ENCODE measurements at regions of chr15 and their contacts with region 1.

Region 1: DNA sequence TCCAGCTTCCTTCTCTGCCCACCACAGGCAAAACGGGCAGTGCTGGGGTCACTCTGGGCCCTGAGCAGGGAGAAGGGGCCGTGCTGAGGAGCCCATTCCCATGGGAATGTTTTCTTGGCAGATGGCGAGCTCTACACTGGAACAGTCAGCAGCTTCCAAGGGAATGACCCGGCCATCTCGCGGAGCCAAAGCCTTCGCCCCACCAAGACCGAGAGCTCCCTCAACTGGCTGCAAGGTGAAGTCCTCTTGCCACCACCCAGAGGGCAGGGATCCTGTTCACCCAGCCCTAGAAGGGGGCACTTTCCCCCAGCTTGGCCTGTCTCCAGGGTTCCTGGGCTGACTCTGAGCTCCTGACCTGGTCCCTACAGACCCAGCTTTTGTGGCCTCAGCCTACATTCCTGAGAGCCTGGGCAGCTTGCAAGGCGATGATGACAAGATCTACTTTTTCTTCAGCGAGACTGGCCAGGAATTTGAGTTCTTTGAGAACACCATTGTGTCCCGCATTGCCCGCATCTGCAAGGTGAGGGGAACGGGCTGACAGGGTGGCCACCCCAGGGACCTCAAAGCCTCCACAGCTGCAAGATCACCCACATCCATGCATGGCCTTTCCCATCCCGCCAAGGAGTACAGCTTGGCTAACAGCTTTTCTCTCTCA is 12.4 kb downstream of the CIB1 start:
- DNase-seq: peak; percentile 86
- ATAC-seq: peak; percentile 98
- H3K4me3 ChIP-seq: no peak overlapping the region
- H3K27ac ChIP-seq: no peak overlapping the region
- H3K4me1 ChIP-seq: peaks cover 3% of the 10 kb centered on the region; the same call in 1 of the 2 replicates
- H3K27me3 ChIP-seq: no peaks in the 10 kb centered on the region
- CTCF ChIP-seq: peak; percentile 89
- POLR2A ChIP-seq: no peak
- RAD21 ChIP-seq: peak; percentile 95

Region 2: DNA sequence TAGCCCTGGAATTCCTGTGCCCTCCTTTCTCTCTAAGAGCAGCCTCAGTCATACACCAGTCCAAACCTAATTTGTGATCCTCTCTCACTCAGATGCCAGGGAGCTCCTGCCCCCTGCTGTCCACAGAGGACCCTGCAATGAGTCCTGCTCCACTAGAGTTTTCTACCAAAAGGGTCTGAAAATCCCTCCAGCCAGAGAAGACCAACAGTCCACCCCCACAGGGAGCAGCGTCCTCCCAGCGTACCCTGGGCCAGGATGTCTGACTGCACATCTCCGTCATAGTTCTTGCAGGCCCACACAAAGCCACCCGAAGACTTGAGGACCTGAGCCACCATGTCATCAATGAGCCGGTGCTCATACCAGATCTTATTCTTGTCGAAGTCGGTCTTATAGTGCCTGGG is 134.5 kb before region 1 on chr15:
- CTCF ChIA-PET with region 1: interaction called, 3 read pairs
- POLR2A ChIA-PET with region 1: no interaction called
- dilution Hi-C with region 1: no loop called
- in situ Hi-C with region 1: no loop called
- intact Hi-C with region 1: loop called (anchors 10 kb)
- DNase-seq: peak; percentile 42
- ATAC-seq: peak; percentile 75
- H3K4me3 ChIP-seq: no peak overlapping the region
- H3K27ac ChIP-seq: no peak overlapping the region
- H3K4me1 ChIP-seq: peaks cover 4% of the 10 kb centered on the region; the same call in 1 of the 2 replicates
- H3K27me3 ChIP-seq: no peaks in the 10 kb centered on the region
- CTCF ChIP-seq: peak; percentile 67
- POLR2A ChIP-seq: no peak
- RAD21 ChIP-seq: peak; percentile 79

Region 3: GRCh38 chr15:90161950-90162361 is 59.4 kb before region 1 on chr15:
- CTCF ChIA-PET with region 1: interaction called, 11 read pairs
- POLR2A ChIA-PET with region 1: no interaction called
- dilution Hi-C with region 1: no loop called
- in situ Hi-C with region 1: loop called (anchors 5 kb)
- intact Hi-C with region 1: no loop called
- DNase-seq: no peak
- ATAC-seq: no peak
- H3K4me3 ChIP-seq: no peak overlapping the region
- H3K27ac ChIP-seq: no peak overlapping the region
- H3K4me1 ChIP-seq: peaks cover 10% of the 10 kb centered on the region
- H3K27me3 ChIP-seq: no peaks in the 10 kb centered on the region
- CTCF ChIP-seq: no peak
- POLR2A ChIP-seq: no peak
- RAD21 ChIP-seq: no peak

Region 4: DNA sequence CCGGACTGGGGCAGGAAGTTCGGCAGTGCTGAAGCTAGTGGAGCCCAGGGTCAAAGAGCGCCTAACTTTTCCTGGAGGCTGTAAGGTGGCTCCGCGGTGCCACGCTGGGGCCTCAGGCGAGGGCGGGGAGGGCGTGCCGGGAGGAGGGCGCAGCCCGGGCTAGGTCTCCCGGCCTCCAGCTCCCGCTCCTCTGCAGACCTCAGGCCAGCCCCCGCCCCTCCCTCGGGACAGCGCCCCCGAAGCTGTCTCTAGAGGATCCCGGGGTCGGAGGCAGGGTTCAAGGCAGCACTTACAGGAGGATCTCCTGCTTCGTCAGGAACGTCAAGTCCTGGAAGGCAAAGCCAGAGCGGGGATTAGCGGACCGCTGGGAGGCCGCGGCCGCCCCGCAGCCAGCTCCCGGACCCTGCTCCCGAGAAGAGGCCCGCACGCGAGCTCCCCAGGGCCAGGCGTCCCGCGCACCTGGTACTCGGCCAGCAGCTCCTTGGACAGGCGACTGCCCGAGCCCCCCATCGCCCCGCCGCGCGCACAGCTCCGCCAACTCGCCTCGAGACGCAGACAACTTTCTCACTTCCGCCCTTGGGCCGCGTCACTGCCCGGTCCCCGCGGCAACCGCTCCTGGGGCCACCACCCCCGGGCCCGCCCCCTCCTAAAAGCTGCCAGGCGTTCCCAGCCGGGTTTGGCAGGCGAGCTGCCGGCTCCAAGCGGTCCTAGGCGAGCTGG is 12.2 kb after region 1 on chr15 and contains the start of gene CIB1:
- CTCF ChIA-PET with region 1: interaction called, 11 read pairs
- POLR2A ChIA-PET with region 1: no interaction called
- dilution Hi-C with region 1: no loop called
- in situ Hi-C with region 1: no loop called
- intact Hi-C with region 1: no loop called
- DNase-seq: peak; percentile 95
- ATAC-seq: peak; percentile 97
- H3K4me3 ChIP-seq: peak within 1 kb of the TSS; percentile 84
- H3K27ac ChIP-seq: peak within 1 kb of the TSS; percentile 77
- H3K4me1 ChIP-seq: peaks cover 4% of the 10 kb centered on the region
- H3K27me3 ChIP-seq: no peaks in the 10 kb centered on the region
- CTCF ChIP-seq: no peak; the same call in 1 of the 2 replicates
- POLR2A ChIP-seq: peak; percentile 85; the same call in 1 of the 2 replicates
- RAD21 ChIP-seq: peak; percentile 48; the same call in 1 of the 2 replicates
- total RNA-seq, gene CIB1: 29.4 and 31.5 TPM in 2 replicates

Region 5: DNA sequence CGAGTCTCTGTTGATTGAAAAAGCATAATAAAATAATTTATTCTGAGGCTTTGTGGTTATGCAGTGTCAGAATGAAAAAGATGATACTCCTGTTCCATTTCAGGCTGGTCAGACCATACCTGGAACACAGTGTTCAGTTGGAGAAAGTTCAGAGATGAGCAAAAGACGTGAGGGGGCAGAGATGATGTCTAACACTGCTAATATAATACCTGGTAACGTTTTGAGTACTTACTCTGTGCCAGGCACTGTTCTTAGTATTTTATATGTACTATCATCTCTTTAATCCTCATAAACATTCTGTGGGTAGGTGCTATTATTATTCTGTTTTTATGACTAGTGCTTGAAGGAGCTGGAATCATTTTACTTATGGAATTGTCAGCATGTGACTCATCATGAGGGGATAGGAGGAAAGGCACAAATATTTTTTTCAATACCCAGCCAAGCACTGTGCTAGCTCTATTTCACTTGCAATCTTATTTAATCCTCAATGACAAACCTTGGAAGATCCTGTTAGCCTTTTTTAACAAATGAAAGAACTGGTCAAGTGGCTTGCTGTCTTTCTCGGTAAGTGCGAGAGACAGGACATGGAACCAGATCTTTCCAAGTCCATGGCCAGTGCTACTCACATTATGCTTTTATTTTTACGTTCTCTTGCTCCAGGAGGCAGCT is 198.5 kb after region 1 on chr15:
- CTCF ChIA-PET with region 1: no interaction called
- POLR2A ChIA-PET with region 1: no interaction called
- dilution Hi-C with region 1: no loop called
- in situ Hi-C with region 1: no loop called
- intact Hi-C with region 1: no loop called
- DNase-seq: peak; percentile 92
- ATAC-seq: peak; percentile 91
- H3K4me3 ChIP-seq: peak overlapping the region; percentile 6; the same call in 1 of the 2 replicates
- H3K27ac ChIP-seq: peak overlapping the region; percentile 80
- H3K4me1 ChIP-seq: peaks cover 17% of the 10 kb centered on the region
- H3K27me3 ChIP-seq: no peaks in the 10 kb centered on the region
- CTCF ChIP-seq: no peak
- POLR2A ChIP-seq: no peak
- RAD21 ChIP-seq: no peak

Measured in IMR-90 (cell line).